HAP-1 (cell line): ENCODE measurements at regions of chr20 and their contacts with region 1.

Region 1: DNA sequence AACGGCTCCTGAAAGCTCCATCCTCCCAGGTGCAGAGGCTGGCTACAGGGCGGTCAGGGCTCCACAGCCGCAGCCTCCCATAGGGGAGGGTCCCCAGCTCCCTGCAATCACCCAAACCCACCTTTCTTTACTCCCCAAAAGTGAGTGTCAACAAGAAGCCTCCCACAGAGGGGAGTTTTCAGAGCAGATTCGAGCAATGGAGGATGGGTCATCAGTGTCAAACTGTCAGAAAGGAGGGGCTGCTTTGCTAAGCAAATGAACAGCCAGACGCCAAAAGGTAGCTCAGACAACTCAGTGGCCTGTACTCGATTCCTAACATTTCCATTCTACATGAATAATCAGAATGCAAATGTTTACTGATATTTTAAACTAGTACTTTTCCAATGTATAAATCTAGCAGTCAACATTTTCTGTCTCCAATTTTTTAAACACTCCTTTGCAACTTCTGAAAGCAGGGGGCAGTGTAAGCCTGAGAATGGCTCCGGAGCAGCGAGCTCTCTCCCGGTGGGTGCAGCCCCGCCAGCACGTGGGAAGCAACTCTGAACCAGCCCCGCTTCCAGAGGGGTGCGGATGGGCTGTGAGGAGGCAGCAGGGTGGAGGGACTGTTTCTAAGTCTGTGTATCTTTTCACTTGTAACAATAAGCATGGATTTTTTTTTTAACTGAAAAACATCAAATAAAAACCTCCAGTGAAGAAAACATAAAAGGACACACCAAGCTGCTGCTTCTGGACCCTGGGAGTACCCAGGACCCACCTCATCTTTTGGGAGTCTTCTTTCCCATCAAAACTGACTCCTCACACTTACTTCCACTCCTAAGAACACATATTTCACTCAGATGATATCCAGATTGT is 54.9 kb downstream of the TAF4 start:
- DNase-seq: peak; percentile 33 to 70
- H3K4me3 ChIP-seq: no peak overlapping the region
- H3K4me1 ChIP-seq: no peaks in the 10 kb centered on the region
- H3K27me3 ChIP-seq: no peaks in the 10 kb centered on the region

Region 2: GRCh38 chr20:61608041-61608835 is 402.5 kb before region 1 on chr20:
- in situ Hi-C with region 1: no loop called
- DNase-seq: peak in 1 of 2 experiments; percentile 15
- H3K4me3 ChIP-seq: no peak overlapping the region
- H3K4me1 ChIP-seq: no peaks in the 10 kb centered on the region
- H3K27me3 ChIP-seq: no peaks in the 10 kb centered on the region

Region 3: DNA sequence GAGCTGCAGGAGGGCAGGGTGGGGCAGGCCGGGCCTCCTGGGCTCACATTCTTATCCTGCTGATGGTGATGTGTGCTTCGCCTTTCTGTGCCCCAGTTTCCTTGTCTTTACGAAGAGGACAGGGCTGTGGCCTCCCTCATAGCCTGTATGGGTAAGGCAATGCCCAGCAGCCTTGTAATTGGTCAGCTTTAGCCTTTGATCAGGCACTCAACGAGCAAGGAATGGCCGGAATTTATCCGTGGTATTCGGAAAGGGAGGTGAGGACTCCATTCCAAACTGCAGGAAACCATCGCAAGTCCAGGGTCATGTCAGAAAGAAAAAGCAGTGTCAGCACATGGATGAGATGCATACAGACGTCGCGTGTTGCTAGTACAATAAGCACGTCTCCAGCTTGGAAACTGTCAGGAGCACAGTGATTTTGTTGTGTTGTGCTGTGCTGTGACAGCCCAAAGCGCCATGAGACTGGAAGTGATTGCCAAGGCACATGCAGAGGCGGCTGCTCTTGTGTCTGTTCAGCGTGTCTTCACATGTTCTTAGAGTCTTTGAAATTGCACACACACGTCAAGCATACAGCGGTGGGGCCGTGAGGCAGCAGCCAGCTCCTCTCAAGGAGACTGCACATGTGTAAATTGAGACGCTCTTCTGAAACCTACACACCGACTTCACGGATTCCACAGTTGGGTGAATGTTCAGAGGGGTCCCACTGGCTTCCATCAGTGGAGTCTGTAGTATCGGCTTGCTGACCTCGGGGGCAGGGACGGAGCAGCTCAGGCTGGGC is 138.9 kb after region 1 on chr20:
- in situ Hi-C with region 1: loop called (anchors 5 kb)
- DNase-seq: no peak
- H3K4me3 ChIP-seq: no peak overlapping the region
- H3K4me1 ChIP-seq: peaks cover 5% of the 10 kb centered on the region
- H3K27me3 ChIP-seq: no peaks in the 10 kb centered on the region